ENCODE measurements at regions of chr7 and their contacts with region 1.

Region 1: DNA sequence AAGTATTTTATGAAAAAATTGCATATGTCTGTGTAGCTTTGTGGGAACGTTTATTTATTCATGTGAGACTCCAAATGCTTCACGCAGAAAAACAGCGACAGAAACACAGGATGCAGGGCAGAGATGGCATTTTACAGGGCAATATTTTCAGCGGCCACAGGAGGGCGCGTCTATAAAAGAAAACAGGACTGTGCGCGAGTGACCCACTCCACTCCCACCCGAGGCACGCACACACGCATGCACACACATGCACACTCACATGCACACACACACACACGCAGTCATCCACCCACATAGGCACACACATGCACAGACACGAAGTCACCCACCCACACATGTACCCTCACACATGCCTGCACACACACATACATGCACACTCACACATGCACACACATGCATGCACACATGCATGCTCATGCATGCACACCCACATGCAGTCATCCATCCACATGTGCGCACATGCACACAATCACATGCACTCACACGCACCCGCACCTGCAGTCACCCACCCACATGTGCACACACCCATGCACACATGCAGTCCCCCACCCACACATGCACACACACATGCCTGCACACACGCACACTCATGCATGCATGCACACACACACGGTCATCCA is 96.3 kb downstream of the DNAJB6 start:
- DNase-seq: peak; percentile 43
- H3K4me3 Mint-ChIP-seq: peak overlapping the region; percentile 58
- H3K27ac Mint-ChIP-seq: no peak overlapping the region
- H3K4me1 Mint-ChIP-seq: peaks cover 14% of the 10 kb centered on the region
- H3K27me3 Mint-ChIP-seq: no peaks in the 10 kb centered on the region

Region 2: DNA sequence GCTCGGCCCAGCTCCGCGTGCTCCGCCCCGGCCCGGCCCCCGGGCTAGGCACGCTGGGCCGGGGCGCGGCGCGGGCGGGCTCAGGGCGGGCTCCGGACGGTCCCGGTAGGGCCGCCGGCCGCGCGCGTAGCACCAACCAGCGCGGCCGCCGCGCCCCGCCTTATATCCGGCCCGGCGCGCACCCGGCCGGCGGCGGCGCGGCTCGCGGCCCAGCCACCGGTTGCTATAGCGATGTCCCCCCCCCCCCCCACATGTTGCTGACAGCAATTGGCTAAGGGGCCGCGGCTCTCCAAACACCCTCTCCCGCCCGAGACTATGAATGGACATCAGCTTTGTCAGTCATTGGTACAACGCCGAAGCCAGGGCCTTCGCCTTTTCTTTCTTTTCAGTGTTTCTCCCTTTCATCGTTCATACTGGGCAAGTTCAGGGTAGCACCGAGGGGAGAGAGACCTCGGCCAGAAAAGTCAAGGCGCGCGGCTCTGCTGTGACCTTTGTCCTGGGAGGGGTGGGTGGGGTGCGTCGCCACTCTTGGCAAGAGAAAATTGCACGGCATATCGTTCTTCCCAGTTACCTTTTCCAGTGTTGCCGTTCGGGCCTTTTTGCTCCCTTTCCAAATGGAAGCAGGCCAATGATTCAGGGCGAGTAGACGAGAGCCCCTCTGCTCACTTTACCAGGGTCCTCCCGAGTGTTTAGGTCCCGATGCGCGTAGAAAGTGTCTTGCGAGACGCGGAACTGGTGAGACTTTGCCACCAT is 257.9 kb after region 1 on chr7:
- intact Hi-C with region 1: loop called (anchors 5 kb)
- DNase-seq: no peak
- H3K4me3 Mint-ChIP-seq: peak overlapping the region; percentile 33
- H3K27ac Mint-ChIP-seq: no peak overlapping the region
- H3K4me1 Mint-ChIP-seq: peaks cover 7% of the 10 kb centered on the region
- H3K27me3 Mint-ChIP-seq: peaks cover 60% of the 10 kb centered on the region

Region 3: GRCh38 chr7:157875230-157876179 is 442.4 kb after region 1 on chr7:
- intact Hi-C with region 1: loop called (anchors 1 kb)
- DNase-seq: peak; percentile 46
- H3K4me3 Mint-ChIP-seq: peak overlapping the region; percentile 47
- H3K27ac Mint-ChIP-seq: no peak overlapping the region
- H3K4me1 Mint-ChIP-seq: peaks cover 7% of the 10 kb centered on the region
- H3K27me3 Mint-ChIP-seq: no peaks in the 10 kb centered on the region